ENCODE measurements at regions of chr11 and their contacts with region 1.

Region 1: GRCh38 chr11:95150946-95151684 is 61.5 kb downstream of the ENDOD1 start:
- DNase-seq: peak; percentile 68
- H3K4me3 ChIP-seq: peak overlapping the region; percentile 45 to 66 (median 64)
- H3K27ac ChIP-seq: peak overlapping the region; percentile 89 to 94 (median 93)
- H3K4me1 ChIP-seq: peaks cover 8 to 67% (median 25%) of the 10 kb centered on the region in 3 donors
- H3K27me3 ChIP-seq: no peaks in the 10 kb centered on the region
- CTCF ChIP-seq: peak; percentile 68 to 97 (median 95)
- POLR2A ChIP-seq: peak in 3 of 4 donors; percentile 5 to 81 (median 42)

Region 2: DNA sequence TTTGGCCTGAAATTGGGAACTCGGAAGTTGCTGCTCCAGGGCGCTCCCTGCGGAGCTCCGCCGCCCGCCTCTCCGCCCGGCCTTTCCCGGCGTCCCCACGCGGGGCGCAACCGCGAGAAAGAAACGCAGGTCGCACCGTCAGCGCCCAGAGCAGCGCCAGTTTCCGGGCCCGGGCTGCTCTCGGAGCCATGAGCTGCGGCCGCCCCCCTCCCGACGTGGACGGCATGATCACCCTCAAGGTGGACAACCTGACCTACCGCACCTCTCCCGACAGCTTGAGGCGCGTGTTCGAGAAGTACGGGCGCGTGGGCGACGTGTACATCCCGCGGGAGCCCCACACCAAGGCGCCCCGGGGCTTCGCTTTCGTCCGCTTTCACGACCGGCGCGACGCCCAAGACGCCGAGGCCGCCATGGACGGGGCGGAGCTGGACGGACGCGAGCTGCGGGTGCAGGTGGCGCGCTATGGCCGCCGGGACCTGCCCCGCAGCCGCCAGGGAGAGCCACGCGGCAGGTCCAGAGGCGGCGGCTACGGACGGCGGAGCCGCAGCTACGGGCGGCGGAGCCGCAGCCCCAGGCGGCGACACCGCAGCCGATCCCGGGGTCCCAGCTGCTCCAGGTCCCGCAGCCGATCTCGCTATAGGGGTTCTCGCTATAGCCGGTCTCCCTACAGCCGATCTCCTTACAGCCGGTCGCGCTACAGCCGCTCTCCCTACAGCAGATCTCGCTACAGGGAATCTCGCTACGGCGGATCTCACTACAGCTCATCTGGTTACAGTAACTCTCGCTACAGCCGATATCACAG is 83.9 kb before region 1 on chr11:
- intact Hi-C with region 1: loop called (anchors 5 kb)
- DNase-seq: no peak
- H3K4me3 ChIP-seq: peak overlapping the region; percentile 61 to 94 (median 86)
- H3K27ac ChIP-seq: peak overlapping the region; percentile 94 to 99 (median 98)
- H3K4me1 ChIP-seq: peaks cover 7 to 35% (median 10%) of the 10 kb centered on the region in 3 donors
- H3K27me3 ChIP-seq: no peaks in the 10 kb centered on the region
- CTCF ChIP-seq: peak in 5 of 6 experiments; percentile 6 to 76 (median 56)
- POLR2A ChIP-seq: peak in 2 of 4 donors; percentile 65 to 74

Region 3: DNA sequence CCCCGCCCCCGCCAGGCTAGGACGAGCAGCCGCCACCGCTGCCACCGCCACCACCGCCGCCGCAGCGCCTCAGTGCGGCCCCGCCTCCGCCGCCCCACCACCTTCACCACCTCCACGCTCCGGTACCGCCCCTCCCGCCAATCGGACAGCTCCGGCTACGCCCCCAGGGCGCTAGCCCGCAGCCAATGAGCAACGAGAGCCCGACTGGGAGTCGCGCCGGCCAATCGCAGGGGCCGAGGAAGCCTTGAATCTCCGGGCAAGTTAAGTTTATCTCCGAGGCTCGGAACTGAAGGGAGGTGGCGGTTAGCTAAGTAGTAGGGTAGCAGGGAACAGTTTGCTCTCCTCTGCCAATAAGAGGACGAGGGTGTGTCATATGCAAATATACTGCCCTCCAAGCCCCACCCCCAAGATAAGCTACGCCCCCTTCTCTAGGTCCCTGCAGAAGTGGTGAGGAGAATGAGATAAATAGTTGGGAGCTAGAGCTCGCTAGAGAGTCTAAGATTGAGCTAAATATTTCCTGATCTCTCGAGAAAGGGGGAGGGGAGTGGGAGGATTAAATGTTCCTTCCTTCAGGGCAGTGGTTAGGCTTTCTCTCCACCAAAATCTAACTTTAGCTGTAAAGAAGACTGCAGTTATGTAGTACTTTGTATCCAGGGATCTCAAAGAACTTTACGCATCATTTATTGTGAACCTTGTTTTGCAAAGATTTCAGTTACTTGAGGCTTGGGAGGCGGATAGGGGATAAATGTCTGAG is 80.2 kb after region 1 on chr11 and contains the start of gene SESN3:
- intact Hi-C with region 1: loop called (anchors 10 kb)
- DNase-seq: peak; percentile 97
- H3K4me3 ChIP-seq: peak within 1 kb of the TSS; percentile 87 to 97 (median 92)
- H3K27ac ChIP-seq: peak within 1 kb of the TSS; percentile 94 to 96 (median 96)
- H3K4me1 ChIP-seq: peaks cover 8 to 64% (median 13%) of the 10 kb centered on the region in 3 donors
- H3K27me3 ChIP-seq: no peaks in the 10 kb centered on the region
- CTCF ChIP-seq: peak in 2 of 6 experiments; percentile 22 to 32
- POLR2A ChIP-seq: peak in 3 of 4 donors; percentile 43 to 80 (median 51)
- total RNA-seq, gene SESN3: 11.3 to 33.7 (median 22.1) TPM